ENCODE measurements at regions of chr9 and their contacts with region 1.

Region 1: GRCh38 chr9:91164724-91165520 is 196.8 kb downstream of the AUH start:
- DNase-seq: peak; percentile 83
- H3K4me3 Mint-ChIP-seq: peak overlapping the region; percentile 81
- H3K27ac Mint-ChIP-seq: peak overlapping the region; percentile 95
- H3K4me1 Mint-ChIP-seq: peaks cover 63% of the 10 kb centered on the region
- H3K27me3 Mint-ChIP-seq: no peaks in the 10 kb centered on the region

Region 2: GRCh38 chr9:91116211-91116610 is 48.7 kb before region 1 on chr9:
- CTCF ChIA-PET with region 1: no interaction called
- POLR2A ChIA-PET with region 1: no interaction called
- DNase-seq: no peak
- H3K4me3 Mint-ChIP-seq: no peak overlapping the region
- H3K27ac Mint-ChIP-seq: no peak overlapping the region
- H3K4me1 Mint-ChIP-seq: peaks cover 33% of the 10 kb centered on the region
- H3K27me3 Mint-ChIP-seq: peaks cover 5% of the 10 kb centered on the region

Region 3: GRCh38 chr9:91150998-91151717 is 13.8 kb before region 1 on chr9:
- CTCF ChIA-PET with region 1: interaction called, 39 read pairs
- POLR2A ChIA-PET with region 1: interaction called, 3 read pairs
- DNase-seq: peak; percentile 76
- H3K4me3 Mint-ChIP-seq: peak overlapping the region; percentile 16
- H3K27ac Mint-ChIP-seq: peak overlapping the region; percentile 86
- H3K4me1 Mint-ChIP-seq: peaks cover 88% of the 10 kb centered on the region
- H3K27me3 Mint-ChIP-seq: no peaks in the 10 kb centered on the region

Region 4: DNA sequence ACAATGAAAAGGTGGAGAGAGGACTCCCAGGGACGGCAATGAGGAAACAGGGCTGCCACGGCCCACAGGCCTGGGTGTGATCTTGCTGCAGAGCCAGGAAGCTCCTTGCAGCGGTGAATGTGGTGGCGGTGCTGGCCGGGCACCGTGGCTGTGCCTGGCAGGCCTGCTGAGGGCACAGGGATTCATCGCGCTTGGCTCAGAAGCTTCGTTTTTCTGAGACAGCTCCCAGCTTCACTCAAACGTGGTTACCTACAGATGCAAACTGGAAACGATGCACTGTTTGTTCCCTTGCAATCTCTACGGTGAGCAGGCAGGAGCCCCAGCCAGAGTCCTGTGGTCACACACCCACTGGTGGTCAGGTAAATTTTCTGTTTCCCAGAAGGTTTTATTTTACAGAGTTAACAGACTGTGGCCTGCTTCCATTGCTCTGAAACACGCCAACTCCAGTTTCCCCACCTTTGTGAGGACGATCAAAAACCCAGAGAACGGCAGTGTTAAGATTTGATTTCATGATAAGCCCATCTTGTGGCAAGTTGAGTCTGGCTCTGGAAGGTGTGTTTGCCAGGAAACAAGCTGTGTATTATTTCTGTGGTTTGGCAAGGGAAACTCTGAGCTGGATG is 12.8 kb after region 1 on chr9:
- CTCF ChIA-PET with region 1: interaction called, 17 read pairs
- POLR2A ChIA-PET with region 1: interaction called, 3 read pairs
- DNase-seq: peak; percentile 53
- H3K4me3 Mint-ChIP-seq: peak overlapping the region; percentile 33
- H3K27ac Mint-ChIP-seq: peak overlapping the region; percentile 87
- H3K4me1 Mint-ChIP-seq: peaks cover 59% of the 10 kb centered on the region
- H3K27me3 Mint-ChIP-seq: no peaks in the 10 kb centered on the region

Measured in activated CD4-positive, alpha-beta T cell treated with anti-CD3 and anti-CD28 coated beads, Interleukin-2, amount 10 ng/mL, durations not matched to agents 7 days and 5 days (primary cell).